PC-3 (cell line): ENCODE measurements at regions of chr12 and their contacts with region 1.

Region 1: DNA sequence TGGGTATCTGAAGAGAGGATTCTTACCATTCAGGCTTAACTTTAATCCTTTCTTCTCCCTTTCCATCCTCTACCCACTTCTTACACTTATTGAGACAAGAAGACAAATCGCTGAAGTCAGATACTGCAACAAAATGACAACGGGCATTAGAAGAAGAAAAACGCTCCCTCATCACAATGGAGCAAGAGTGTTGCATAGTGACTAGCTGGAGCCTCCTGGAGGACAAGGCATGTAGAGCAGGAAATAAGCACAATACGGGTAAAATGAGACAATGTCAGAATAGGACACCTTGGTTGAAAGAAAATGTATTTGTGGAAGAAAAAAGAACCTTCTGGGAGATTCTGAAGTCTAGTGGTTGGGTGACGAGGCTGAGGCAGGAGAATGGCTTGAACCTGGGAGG is 501.0 kb downstream of the RERGL start:
- DNase-seq: peak; percentile 70
- ATAC-seq: peak; percentile 71
- H3K4me3 ChIP-seq: peak overlapping the region; percentile 39
- H3K27ac ChIP-seq: no peak overlapping the region
- H3K4me1 ChIP-seq: peaks cover 6% of the 10 kb centered on the region; the same call in 1 of the 2 replicates
- H3K27me3 ChIP-seq: no peaks in the 10 kb centered on the region
- CTCF ChIP-seq: peak; percentile 81

Region 2: GRCh38 chr12:16939871-16940306 is 649.1 kb before region 1 on chr12:
- CTCF ChIA-PET with region 1: no interaction called
- POLR2A ChIA-PET with region 1: no interaction called
- intact Hi-C with region 1: loop called (anchors 2 kb)
- DNase-seq: peak; percentile 81
- ATAC-seq: peak; percentile 65
- H3K4me3 ChIP-seq: no peak overlapping the region
- H3K27ac ChIP-seq: no peak overlapping the region
- H3K4me1 ChIP-seq: no peaks in the 10 kb centered on the region
- H3K27me3 ChIP-seq: no peaks in the 10 kb centered on the region
- CTCF ChIP-seq: peak; percentile 96

Region 3: DNA sequence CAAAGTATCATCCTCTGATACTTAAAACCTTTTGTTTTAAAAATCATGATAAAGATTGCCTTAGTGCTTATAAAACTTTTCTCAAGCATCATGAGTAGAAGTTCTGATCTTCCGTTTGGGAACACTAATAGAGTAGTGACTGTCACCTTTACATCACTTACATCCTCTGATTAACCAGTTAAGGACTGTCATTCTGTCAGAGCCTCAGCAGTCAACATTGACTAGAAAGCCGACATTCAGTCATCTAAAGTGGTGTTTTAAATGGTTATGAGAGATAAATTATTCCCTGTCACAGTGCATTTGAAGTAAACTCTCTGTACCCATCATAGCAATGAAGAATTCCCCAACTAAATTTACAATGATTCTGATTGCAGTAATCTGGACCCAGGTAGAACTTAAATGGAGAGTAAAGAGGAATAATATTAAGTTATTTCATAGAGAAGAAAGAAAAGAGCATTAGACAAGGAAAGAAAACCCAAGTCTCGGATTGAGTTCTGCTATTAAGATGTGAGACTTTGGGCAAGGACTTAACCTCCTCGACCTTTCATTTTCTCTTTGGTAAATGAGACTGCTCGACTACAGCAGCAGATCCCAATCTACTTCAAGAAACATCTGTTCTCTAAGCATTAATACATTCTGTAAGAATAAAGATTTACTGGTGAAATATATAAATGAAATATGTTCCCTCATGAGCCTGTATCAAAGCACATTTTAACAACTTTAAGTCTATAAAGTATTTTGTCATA is 419.1 kb before region 1 on chr12:
- CTCF ChIA-PET with region 1: no interaction called
- POLR2A ChIA-PET with region 1: no interaction called
- intact Hi-C with region 1: loop called (anchors 2 kb)
- DNase-seq: no peak
- ATAC-seq: no peak
- H3K4me3 ChIP-seq: no peak overlapping the region
- H3K27ac ChIP-seq: no peak overlapping the region
- H3K4me1 ChIP-seq: no peaks in the 10 kb centered on the region
- H3K27me3 ChIP-seq: no peaks in the 10 kb centered on the region
- CTCF ChIP-seq: no peak

Region 4: DNA sequence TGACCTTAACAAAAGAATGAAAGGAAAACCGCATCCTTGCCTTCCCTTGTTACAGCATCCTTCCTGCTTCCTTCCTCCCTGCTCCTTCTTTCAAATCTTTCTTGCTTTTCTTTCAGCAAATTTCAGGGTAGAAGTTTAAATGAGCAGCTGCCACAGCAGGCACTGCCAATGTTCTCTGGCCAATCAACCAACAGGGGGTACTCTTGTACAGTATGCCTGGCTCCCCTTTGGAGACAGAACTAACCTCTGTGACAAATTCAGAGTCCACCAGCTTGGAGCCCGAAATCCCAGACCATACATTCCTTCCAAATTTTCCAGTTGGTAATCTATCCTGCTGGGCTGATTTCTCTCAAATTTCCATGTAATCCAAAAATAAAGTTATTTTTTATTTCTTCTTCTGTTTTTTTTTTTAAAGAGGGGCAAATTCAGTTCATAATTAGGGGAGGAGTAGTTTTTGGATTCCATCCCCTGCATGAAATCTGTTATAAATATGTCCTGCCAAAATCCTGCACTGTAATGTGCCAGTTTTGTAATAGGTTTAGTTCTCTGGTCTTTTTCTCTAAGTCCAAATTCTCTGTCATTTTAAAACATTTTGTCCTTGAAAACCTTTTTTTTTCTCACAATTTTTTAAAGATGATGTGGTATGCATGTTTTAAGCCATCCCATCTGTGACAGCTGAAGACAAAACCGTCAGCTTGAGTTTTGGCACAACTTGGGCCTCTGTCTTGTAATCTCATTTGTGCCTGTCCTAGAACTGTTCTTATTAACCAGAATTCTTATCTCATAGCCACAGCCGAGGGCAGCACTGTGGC is 373.0 kb before region 1 on chr12:
- CTCF ChIA-PET with region 1: no interaction called
- POLR2A ChIA-PET with region 1: no interaction called
- intact Hi-C with region 1: loop called (anchors 2 kb)
- DNase-seq: peak; percentile 38
- ATAC-seq: no peak
- H3K4me3 ChIP-seq: no peak overlapping the region
- H3K27ac ChIP-seq: no peak overlapping the region
- H3K4me1 ChIP-seq: no peaks in the 10 kb centered on the region
- H3K27me3 ChIP-seq: no peaks in the 10 kb centered on the region
- CTCF ChIP-seq: peak; percentile 52

Region 5: GRCh38 chr12:17550011-17550410 is 39.0 kb before region 1 on chr12:
- CTCF ChIA-PET with region 1: no interaction called
- POLR2A ChIA-PET with region 1: no interaction called
- intact Hi-C with region 1: no loop called
- DNase-seq: no peak
- ATAC-seq: no peak
- H3K4me3 ChIP-seq: no peak overlapping the region
- H3K27ac ChIP-seq: no peak overlapping the region
- H3K4me1 ChIP-seq: no peaks in the 10 kb centered on the region
- H3K27me3 ChIP-seq: no peaks in the 10 kb centered on the region
- CTCF ChIP-seq: no peak